ENCODE measurements at regions of chr18 and their contacts with region 1.

Region 1: GRCh38 chr18:8608795-8609658 is at the start of gene RAB12:
- DNase-seq: peak; percentile 96
- H3K4me3 Mint-ChIP-seq: peak within 1 kb of the TSS; percentile 93
- H3K27ac Mint-ChIP-seq: peak within 1 kb of the TSS; percentile 92
- H3K4me1 Mint-ChIP-seq: peaks cover 43% of the 10 kb centered on the region
- H3K27me3 Mint-ChIP-seq: peaks cover 17% of the 10 kb centered on the region
- total RNA-seq, gene RAB12: 19.2 and 20.2 TPM in 2 replicates

Region 2: DNA sequence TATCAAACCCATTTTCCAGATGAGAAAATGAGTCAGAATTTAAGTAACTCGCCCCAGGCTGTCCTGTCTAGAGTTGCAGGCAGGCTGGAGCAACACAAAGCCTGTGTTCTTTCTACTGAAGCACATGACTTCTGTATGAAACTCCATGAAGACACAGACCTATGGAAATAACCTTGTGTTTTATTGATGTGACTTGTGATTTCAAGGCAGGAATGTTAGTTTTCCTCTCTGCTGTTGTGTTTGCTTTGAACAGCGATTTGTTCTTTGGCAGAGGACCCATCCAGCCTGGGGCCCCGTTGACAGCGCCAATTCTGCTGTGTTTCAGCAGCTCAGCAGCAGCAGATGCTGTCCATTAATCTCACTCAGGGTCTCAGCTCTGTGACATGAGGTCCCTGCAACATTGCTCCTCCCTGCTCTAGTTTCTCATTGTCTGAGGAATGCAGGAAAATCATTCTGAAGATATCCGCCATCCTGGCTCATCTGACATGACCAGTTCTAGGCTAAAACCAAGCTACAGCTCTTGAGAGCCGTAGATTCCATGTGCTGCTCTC is 344.1 kb before region 1 on chr18:
- intact Hi-C with region 1: no loop called
- DNase-seq: peak; percentile 37
- H3K4me3 Mint-ChIP-seq: no peak overlapping the region
- H3K27ac Mint-ChIP-seq: no peak overlapping the region
- H3K4me1 Mint-ChIP-seq: no peaks in the 10 kb centered on the region
- H3K27me3 Mint-ChIP-seq: no peaks in the 10 kb centered on the region

Region 3: DNA sequence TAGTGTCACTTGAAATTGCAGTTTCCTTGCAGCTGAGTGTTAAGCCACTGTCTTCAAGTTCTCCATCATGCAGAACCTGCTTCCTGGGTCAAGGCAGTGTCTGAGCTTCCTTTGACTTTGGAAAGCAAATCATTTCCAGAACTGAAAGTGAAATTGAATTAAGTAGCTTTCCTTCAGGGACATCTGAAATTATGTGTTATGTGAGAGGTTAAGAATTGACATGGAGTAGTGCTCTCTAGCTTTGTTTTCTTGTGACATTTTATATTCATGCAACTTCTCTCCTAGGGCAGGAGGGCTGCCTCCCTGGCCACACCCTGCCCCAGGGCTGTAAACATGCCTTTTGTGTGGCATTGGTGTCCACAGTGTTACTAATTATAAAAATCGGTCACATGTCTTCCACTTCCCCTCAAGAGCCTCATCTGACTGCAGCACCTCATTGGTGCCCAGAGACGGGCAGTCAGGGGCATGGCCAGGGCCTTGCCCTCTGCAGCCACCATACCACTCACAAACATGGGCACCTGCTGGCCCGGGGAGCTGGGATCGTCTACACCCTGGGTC is 14.6 kb after region 1 on chr18:
- intact Hi-C with region 1: loop called (anchors 1 kb)
- DNase-seq: peak; percentile 72
- H3K4me3 Mint-ChIP-seq: peak overlapping the region; percentile 43
- H3K27ac Mint-ChIP-seq: peak overlapping the region; percentile 80
- H3K4me1 Mint-ChIP-seq: peaks cover 30% of the 10 kb centered on the region
- H3K27me3 Mint-ChIP-seq: no peaks in the 10 kb centered on the region

Region 4: DNA sequence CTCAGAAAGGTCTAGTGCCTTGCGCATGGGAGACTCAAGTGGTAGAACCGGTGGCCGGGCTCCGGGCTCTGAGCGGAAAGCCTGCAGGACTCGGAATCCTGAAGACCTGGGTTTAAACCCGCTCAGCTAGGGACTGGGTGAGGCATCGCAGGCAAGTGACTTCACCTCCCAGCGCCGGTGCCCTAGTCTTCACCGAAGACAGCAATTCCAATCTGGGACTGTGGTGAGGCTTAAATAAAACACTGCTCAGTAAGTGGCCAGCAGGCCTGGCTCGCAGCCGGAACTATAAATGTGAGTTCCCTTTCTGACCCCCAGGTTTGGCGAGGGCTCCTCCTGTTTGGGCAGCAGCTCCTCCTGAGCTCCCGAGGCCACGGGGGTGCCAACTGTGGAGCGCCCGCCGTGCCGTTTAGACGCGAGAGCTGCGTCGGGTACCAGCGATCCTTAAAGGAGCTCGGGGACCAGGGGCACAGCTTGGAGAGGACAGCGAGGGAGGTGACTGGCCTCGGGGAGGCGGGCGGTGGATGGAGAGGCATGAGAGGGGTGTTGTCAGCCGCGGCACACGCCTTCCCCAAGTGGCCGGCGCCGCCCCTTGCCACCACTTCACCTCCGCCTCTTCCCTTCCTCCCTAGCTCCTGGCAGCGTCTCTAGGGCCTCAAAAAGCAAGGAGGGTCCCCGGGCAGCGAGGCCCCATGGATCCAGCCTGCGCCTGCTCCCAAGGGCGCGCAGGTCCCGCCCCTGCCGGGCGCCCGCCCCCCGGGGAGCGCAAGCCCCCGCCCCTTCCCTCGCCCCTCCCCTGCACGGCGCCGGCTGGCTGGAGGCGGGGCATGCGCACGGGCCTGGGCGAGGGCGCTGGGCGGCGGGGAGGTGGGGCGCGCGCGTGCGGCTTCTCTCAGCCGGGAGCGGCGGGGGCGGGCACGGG is 95.6 kb after region 1 on chr18:
- intact Hi-C with region 1: loop called (anchors 2 kb)
- DNase-seq: peak; percentile 96
- H3K4me3 Mint-ChIP-seq: peak overlapping the region; percentile 95
- H3K27ac Mint-ChIP-seq: peak overlapping the region; percentile 72
- H3K4me1 Mint-ChIP-seq: peaks cover 9% of the 10 kb centered on the region
- H3K27me3 Mint-ChIP-seq: peaks cover 69% of the 10 kb centered on the region

Region 5: DNA sequence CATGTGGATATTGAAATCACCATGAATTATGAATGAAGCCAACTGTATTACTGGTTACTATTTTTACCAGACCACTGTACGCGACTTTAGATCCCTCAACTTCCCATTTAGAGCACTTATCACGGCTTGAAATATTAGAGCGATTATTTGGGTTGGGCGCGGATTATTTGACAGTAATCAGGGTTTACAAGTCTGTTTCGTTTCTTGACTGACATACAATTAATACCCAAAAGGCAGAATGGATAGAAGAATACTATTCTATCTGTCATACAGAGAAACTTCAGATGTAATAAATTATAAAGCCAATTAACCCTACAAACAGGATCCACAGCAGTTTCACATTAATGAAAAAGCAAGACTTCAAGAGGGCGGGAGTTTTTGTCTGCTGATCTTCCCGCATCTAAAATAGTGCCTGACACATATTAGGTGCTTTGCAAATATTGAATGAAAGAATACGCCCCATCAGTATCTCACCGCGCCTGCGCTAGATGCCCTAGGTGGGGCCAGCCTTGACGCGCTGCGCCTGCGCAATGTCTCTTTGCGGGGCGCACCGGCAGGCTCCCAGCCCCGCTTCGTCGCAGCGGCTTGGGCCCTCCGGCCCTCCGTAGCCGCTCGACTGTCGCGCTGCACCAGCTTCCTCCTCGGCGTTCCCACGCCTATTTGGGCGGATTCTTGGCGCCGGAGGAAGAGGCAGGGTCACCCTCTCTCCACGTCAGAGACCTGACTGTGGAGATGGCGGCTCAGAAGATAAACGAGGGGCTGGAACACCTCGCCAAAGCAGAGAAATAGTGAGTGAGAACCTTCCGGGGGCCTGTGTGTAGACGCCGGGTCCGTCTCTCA is 1916.6 kb after region 1 on chr18 and contains the start of gene NAPG:
- intact Hi-C with region 1: loop called (anchors 5 kb)
- DNase-seq: peak; percentile 98
- H3K4me3 Mint-ChIP-seq: peak within 1 kb of the TSS; percentile 96
- H3K27ac Mint-ChIP-seq: peak within 1 kb of the TSS; percentile 98
- H3K4me1 Mint-ChIP-seq: peaks cover 41% of the 10 kb centered on the region
- H3K27me3 Mint-ChIP-seq: peaks cover 8% of the 10 kb centered on the region
- total RNA-seq, gene NAPG: 36.4 and 38.7 TPM in 2 replicates